Gastrocnemius medialis (tissue), 4 donors: ENCODE measurements at regions of chr10 and their contacts with region 1.

Region 1: GRCh38 chr10:4663162-4663904 is 162.7 kb upstream of the AKR1E2 start:
- DNase-seq: peak; percentile 94 to 95
- ATAC-seq: peak; percentile 78 to 83
- H3K4me3 ChIP-seq: peak overlapping the region in 3 of 4 donors; percentile 5 to 28 (median 22)
- H3K27ac ChIP-seq: peak overlapping the region; percentile 91 to 99 (median 96)
- H3K4me1 ChIP-seq: peaks cover 41 to 51% of the 10 kb centered on the region in 2 donors
- H3K27me3 ChIP-seq: no peaks in the 10 kb centered on the region
- CTCF ChIP-seq: no peak
- POLR2A ChIP-seq: peak; percentile 66 to 77

Region 2: DNA sequence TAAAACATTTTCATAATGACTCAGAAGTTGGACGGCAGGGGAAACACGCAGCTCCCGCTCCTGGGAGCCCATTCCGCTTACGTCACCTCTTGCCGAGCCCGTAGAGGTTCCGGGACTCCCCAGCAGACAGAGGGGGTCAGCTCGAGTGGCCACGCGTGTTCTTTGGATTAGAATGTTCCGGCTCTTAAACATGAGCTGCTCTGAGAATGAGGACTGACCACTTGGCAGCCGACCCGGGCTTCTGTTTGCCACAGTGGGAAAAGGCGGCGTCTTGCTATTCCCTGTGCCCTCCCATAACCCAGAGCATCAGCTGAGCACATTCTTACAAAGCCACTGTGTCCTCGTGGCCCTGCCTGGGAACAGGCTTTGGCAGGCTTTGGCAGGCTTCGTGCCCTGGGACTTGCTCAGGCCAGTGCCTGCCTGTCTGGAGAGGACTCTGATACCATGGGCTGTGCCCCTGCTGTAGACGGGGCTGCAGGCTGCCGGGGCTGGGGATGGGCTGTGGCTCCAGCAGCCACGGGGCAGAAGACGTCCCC is 1555.8 kb before region 1 on chr10:
- in situ Hi-C with region 1: no loop called
- intact Hi-C with region 1: loop called (anchors 5 kb)
- DNase-seq: peak; percentile 92 to 97
- ATAC-seq: peak; percentile 76 to 90
- H3K4me3 ChIP-seq: peak overlapping the region in 3 of 4 donors; percentile 23 to 26 (median 26)
- H3K27ac ChIP-seq: peak overlapping the region; percentile 85 to 92 (median 86)
- H3K4me1 ChIP-seq: peaks cover 58 to 75% of the 10 kb centered on the region in 2 donors
- H3K27me3 ChIP-seq: no peaks in the 10 kb centered on the region
- CTCF ChIP-seq: peak in 1 of 5 experiments; percentile 10
- POLR2A ChIP-seq: peak; percentile 43 to 52

Region 3: DNA sequence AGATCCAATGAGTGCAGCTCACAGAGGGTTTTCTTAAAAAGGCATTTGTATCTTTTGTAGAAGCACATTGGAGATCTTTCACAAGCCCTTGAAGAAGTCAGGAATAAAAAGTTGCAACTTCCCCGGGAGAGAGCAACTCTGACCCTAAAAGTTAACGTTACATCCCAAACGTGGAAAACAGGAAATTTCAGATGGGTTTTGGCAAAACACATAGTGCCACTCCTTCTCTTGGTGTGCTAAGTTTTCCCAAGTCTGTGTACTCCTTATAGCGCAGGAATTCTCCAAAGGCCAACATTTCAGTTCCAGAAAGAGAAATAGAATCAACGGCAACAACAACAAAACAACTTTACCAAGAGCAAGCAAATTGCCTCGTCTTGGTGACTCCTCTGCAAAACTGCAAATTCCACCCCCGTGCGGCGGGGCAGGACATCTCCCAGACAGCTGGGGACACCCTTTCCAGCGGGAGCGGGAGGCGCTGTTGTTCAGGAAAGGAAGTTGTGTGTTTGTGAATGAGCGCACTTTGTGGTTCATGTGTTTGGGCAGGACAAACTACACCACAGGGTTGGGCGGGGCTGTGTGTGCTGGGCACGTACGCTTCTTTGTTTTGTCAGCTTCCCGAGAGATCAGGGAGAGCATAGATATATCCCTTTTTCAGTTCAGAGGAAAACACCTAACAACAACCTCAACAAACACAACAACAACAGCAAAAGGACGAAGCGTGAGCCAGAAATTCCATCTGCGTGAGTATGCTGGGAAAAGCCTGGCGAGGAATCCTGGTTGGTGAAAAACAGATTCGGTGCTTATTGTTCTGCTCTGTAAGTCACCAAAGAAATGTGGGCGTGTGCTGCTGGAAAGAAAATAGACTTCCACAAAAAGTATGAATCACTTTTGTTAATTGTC is 1196.0 kb before region 1 on chr10:
- in situ Hi-C with region 1: loop called in 3 of 4 experiments (anchors 25 kb)
- intact Hi-C with region 1: loop called (anchors 2 kb)
- DNase-seq: peak; percentile 83 to 86
- ATAC-seq: peak; percentile 67 to 77
- H3K4me3 ChIP-seq: peak overlapping the region; percentile 34 to 41 (median 38)
- H3K27ac ChIP-seq: peak overlapping the region; percentile 86 to 96 (median 92)
- H3K4me1 ChIP-seq: peaks cover 25 to 43% of the 10 kb centered on the region in 2 donors
- H3K27me3 ChIP-seq: no peaks in the 10 kb centered on the region
- CTCF ChIP-seq: peak; percentile 26 to 78 (median 68)
- POLR2A ChIP-seq: peak; percentile 53 to 62

Region 4: DNA sequence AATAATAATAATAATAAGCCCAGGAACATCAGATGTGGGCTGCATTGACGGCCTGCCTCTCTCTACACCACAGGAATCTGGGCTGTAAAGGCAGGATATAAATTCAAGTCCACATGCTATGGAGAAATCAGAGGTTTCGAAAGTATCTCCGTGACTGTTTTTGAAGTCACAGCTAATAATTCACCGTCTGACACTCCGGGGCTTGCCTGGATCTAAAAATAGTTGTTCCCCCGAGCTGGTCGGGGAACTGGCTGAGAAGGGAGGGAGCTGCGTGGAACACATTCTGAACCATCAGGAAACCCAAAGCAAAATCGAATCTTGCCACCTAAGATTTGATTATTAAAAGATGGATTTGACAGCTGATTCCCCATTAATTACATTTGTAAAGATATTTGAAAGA is 913.7 kb before region 1 on chr10:
- in situ Hi-C with region 1: no loop called
- intact Hi-C with region 1: loop called (anchors 2 kb)
- DNase-seq: peak; percentile 82 to 87
- ATAC-seq: peak; percentile 92 to 94
- H3K4me3 ChIP-seq: peak overlapping the region; percentile 13 to 60 (median 42)
- H3K27ac ChIP-seq: peak overlapping the region; percentile 73 to 93 (median 90)
- H3K4me1 ChIP-seq: peaks cover 34 to 41% of the 10 kb centered on the region in 2 donors
- H3K27me3 ChIP-seq: no peaks in the 10 kb centered on the region
- CTCF ChIP-seq: no peak
- POLR2A ChIP-seq: peak; percentile 88

Region 5: GRCh38 chr10:3811291-3811870 is 852.0 kb before region 1 on chr10:
- in situ Hi-C with region 1: loop called in 2 of 4 experiments (anchors 5 to 25 kb)
- intact Hi-C with region 1: loop called (anchors 1 kb)
- DNase-seq: peak in 1 of 2 donors; percentile 61
- ATAC-seq: peak; percentile 33 to 58
- H3K4me3 ChIP-seq: peak overlapping the region in 3 of 4 donors; percentile 17 to 26 (median 18)
- H3K27ac ChIP-seq: peak overlapping the region; percentile 85 to 96 (median 90)
- H3K4me1 ChIP-seq: peaks cover 45 to 46% of the 10 kb centered on the region in 2 donors
- H3K27me3 ChIP-seq: no peaks in the 10 kb centered on the region
- CTCF ChIP-seq: no peak
- POLR2A ChIP-seq: peak in 1 of 2 donors; percentile 42

Region 6: DNA sequence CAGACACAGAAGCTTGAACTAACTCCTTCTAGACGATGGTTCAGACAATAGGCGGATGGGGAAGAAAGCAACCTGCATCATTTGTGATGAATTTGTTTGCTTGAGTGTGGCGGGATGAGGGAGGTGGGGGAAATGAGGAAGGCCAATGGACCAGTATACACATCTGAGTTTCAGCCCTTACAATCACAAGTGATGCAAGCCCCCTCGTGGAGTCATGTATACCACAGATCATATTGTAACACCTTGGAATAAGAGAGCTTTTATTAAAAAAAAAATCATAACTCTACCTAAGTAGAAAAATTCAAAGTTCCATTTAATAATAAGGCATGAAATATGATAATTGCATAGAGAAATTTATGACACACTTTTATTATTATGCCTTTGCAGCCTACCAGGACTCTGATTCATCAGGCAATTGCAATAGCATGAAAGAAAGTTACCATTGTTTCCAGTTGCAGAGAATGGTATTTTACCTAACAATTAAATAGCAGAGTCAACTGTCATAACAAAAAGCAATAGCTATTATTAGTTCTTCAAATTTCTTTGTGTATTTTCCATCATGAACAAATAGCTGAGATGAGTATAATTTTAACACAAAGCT is 67.5 kb before region 1 on chr10:
- in situ Hi-C with region 1: no loop called
- intact Hi-C with region 1: no loop called
- DNase-seq: no peak
- ATAC-seq: no peak
- H3K4me3 ChIP-seq: no peak overlapping the region
- H3K27ac ChIP-seq: no peak overlapping the region
- H3K4me1 ChIP-seq: no peaks in the 10 kb centered on the region
- H3K27me3 ChIP-seq: no peaks in the 10 kb centered on the region
- CTCF ChIP-seq: no peak
- POLR2A ChIP-seq: no peak

Region 7: DNA sequence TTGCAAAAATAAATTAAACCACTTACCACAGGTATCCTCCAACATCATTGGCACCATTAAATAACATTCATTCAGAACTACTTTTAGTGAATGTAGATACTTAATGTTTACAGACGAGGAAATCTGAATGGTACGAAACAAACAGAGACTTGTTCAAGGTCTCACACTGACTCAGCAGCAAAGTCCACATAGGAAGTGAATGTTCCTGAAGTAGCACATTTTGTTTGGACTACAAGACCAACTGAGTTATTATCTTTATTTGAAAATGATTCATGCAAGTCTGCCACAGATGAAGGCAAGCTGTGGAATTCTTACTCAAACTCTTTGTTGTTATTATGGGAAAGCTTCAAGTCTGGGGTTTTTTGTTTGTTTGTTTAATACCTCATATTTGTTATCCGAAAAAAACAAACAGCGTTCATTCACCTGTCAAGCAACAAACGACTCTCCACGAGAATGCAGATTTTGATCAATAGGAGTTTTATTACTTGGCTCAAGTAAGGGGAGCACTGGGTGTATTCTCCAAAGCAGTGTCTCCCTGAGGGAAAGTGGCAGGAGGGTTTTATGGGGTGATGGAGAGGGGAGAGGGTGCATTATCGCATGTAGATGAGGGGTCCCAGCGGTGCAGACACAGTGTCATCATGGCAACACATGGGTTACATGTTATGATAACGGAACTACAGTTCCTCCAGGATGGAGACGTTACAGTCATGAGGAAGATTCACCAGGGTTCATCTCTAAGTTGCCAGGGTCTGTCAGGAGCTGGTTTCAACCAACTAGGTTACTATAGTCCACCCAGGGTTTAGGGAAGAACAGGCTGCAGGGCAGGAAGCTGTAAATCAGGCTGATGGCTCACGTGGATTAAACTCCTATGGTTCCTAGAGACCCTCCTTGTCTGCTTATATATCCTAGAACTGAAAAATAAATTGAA is 15.0 kb after region 1 on chr10:
- in situ Hi-C with region 1: no loop called
- intact Hi-C with region 1: loop called (anchors 2 kb)
- DNase-seq: no peak
- ATAC-seq: peak; percentile 57 to 85
- H3K4me3 ChIP-seq: no peak overlapping the region
- H3K27ac ChIP-seq: peak overlapping the region; percentile 69 to 96 (median 93)
- H3K4me1 ChIP-seq: peaks cover 25 to 32% of the 10 kb centered on the region in 2 donors
- H3K27me3 ChIP-seq: no peaks in the 10 kb centered on the region
- CTCF ChIP-seq: no peak
- POLR2A ChIP-seq: no peak

Region 8: DNA sequence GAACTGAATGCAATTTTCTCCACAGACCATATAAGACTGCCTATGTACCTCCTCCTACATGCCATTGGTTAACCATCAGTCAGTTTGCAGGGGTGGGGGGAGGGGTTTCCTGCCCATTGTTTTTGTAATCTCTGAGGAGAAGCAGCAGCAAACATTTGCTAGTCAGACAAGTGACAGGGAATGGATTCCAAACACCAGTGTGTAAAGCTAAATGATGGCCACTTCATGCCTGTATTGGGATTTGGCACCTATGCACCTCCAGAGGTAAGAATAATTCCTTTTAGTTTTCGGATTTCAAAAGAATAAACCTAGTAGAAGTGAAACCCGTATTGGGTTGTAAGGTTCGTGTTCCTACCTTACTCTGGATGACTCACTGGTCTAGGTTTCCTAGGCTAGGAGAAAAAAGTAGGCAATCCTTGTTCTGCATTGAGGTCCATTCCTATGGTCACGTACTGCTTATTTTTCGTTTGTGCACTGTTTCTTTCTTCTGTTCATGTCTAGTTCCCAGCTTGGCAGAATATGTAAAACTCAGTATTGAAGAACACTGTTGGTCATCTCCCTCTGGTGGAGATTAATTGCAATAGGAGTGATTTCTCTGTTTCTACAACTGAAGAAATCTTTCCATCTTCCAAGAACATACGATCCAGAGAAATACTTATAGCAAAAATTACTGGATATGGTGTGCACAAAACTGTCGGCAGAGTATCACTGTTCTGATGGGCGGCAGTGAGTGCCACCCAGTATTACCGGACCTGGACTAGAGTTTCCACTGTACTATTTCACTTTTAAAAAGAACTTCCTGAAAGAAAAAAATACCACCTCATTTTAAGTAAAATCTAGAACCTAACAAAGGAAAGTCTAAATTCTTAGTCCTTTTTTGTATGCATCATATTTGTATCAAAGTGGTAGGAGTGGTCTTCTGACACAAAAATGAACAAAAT is 431.2 kb after region 1 on chr10 and contains the start of gene AKR1C3:
- in situ Hi-C with region 1: no loop called
- intact Hi-C with region 1: no loop called
- DNase-seq: no peak
- ATAC-seq: peak; percentile 91 to 94
- H3K4me3 ChIP-seq: peak within 1 kb of the TSS; percentile 59 to 86 (median 62)
- H3K27ac ChIP-seq: peak within 1 kb of the TSS; percentile 65 to 83 (median 76)
- H3K4me1 ChIP-seq: peaks cover 8 to 18% of the 10 kb centered on the region in 2 donors
- H3K27me3 ChIP-seq: no peaks in the 10 kb centered on the region
- CTCF ChIP-seq: peak; percentile 65 to 76 (median 72)
- POLR2A ChIP-seq: peak; percentile 19 to 48
- total RNA-seq, gene AKR1C3: 48.3 to 293 (median 197) TPM